ENCODE measurements at regions of chr19 and their contacts with region 1.

Region 1: GRCh38 chr19:44903602-44904425 is 1.8 kb upstream of the APOE start:
- DNase-seq: peak; percentile 58 to 89 (median 78)
- H3K4me3 ChIP-seq: peak overlapping the region in 7 of 59 donors; percentile 2 to 33 (median 23)
- H3K27ac ChIP-seq: peak overlapping the region in 33 of 59 donors; percentile 8 to 78 (median 52)
- H3K27me3 ChIP-seq: peaks cover 0 to 25% (median 6%) of the 10 kb centered on the region in 45 donors
- CTCF ChIP-seq: peak; percentile 93 to 100 (median 98)

Region 2: GRCh38 chr19:45001087-45001739 is 97.4 kb after region 1 on chr19 and contains the start of gene RELB:
- intact Hi-C with region 1: loop called in 1 of 2 experiments (anchors 5 kb)
- DNase-seq: peak; percentile 83 to 94 (median 89)
- H3K4me3 ChIP-seq: peak within 1 kb of the TSS; percentile 39 to 82 (median 70)
- H3K27ac ChIP-seq: peak within 1 kb of the TSS; percentile 41 to 97 (median 88)
- H3K27me3 ChIP-seq: no peaks in the 10 kb centered on the region
- CTCF ChIP-seq: no peak
- total RNA-seq, gene RELB: 1.5 to 13.8 (median 4.1) TPM

Measured in dorsolateral prefrontal cortex (tissue), 120 donors.